A673 (cell line): ENCODE measurements at regions of chr11 and their contacts with region 1.

Region 1: GRCh38 chr11:117946842-117947526 is 17.8 kb upstream of the TMPRSS13 start:
- DNase-seq: peak; percentile 95
- H3K4me3 ChIP-seq: no peak overlapping the region
- H3K27ac ChIP-seq: no peak overlapping the region
- H3K4me1 ChIP-seq: no peaks in the 10 kb centered on the region
- H3K27me3 ChIP-seq: peaks cover 6% of the 10 kb centered on the region
- CTCF ChIP-seq: peak; percentile 97

Region 2: GRCh38 chr11:117426269-117426685 is 520.7 kb before region 1 on chr11:
- CTCF ChIA-PET with region 1: interaction called, 16 read pairs
- POLR2A ChIA-PET with region 1: no interaction called
- intact Hi-C with region 1: no loop called
- DNase-seq: peak; percentile 73
- H3K4me3 ChIP-seq: no peak overlapping the region
- H3K27ac ChIP-seq: no peak overlapping the region
- H3K4me1 ChIP-seq: no peaks in the 10 kb centered on the region
- H3K27me3 ChIP-seq: no peaks in the 10 kb centered on the region
- CTCF ChIP-seq: peak; percentile 100

Region 3: GRCh38 chr11:117807482-117808327 is 139.3 kb before region 1 on chr11:
- CTCF ChIA-PET with region 1: interaction called, 24 read pairs
- POLR2A ChIA-PET with region 1: interaction called, 3 read pairs
- intact Hi-C with region 1: no loop called
- DNase-seq: peak; percentile 83
- H3K4me3 ChIP-seq: no peak overlapping the region
- H3K27ac ChIP-seq: no peak overlapping the region
- H3K4me1 ChIP-seq: peaks cover 11% of the 10 kb centered on the region
- H3K27me3 ChIP-seq: peaks cover 3% of the 10 kb centered on the region
- CTCF ChIP-seq: peak; percentile 93

Region 4: GRCh38 chr11:117817368-117818040 is 129.5 kb before region 1 on chr11:
- CTCF ChIA-PET with region 1: interaction called, 41 read pairs
- POLR2A ChIA-PET with region 1: no interaction called
- intact Hi-C with region 1: loop called (anchors 1 kb)
- DNase-seq: peak; percentile 89
- H3K4me3 ChIP-seq: no peak overlapping the region
- H3K27ac ChIP-seq: no peak overlapping the region
- H3K4me1 ChIP-seq: peaks cover 35% of the 10 kb centered on the region
- H3K27me3 ChIP-seq: no peaks in the 10 kb centered on the region
- CTCF ChIP-seq: peak; percentile 99

Region 5: GRCh38 chr11:117843666-117844484 is 103.1 kb before region 1 on chr11:
- CTCF ChIA-PET with region 1: interaction called, 69 read pairs
- POLR2A ChIA-PET with region 1: no interaction called
- intact Hi-C with region 1: loop called (anchors 1 kb)
- DNase-seq: peak; percentile 71
- H3K4me3 ChIP-seq: no peak overlapping the region
- H3K27ac ChIP-seq: no peak overlapping the region
- H3K4me1 ChIP-seq: no peaks in the 10 kb centered on the region
- H3K27me3 ChIP-seq: no peaks in the 10 kb centered on the region
- CTCF ChIP-seq: peak; percentile 99

Region 6: DNA sequence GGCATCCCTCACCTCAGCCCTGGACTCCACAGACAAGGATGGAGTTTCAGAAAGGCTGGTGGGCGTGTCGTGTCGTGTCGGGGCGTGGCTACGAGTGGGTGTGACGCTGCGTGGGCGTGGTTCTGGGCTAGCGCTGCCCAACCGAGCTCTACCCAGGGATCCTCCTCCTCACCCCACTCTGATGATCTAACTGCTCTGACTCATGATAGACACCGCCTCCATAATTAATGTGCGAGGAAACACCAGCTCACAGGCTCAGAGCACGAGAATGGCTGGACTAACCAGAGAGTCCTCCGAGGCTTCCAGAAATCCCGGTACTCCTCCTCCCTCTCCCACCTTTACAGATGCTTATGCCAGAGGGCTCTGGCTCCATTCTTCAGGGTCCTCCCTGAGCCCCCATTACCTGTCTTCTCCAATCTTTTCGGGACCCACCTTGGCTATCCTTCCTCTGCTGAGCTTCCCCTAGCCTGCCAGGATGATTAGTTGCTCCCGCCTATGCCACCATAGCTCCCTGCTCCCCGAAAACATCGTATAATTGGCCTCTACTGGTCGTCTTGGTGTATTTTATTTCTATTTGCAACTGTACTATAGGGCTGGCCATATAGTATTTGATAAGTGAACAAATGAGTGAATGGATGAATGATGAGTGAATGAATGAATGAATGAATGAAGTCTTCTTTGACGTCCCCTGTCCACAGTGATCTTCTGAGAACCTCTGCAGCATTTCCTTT is 39.6 kb before region 1 on chr11:
- CTCF ChIA-PET with region 1: interaction called, 10 read pairs
- POLR2A ChIA-PET with region 1: no interaction called
- intact Hi-C with region 1: no loop called
- DNase-seq: peak; percentile 98
- H3K4me3 ChIP-seq: peak overlapping the region; percentile 44
- H3K27ac ChIP-seq: peak overlapping the region; percentile 87
- H3K4me1 ChIP-seq: peaks cover 18% of the 10 kb centered on the region
- H3K27me3 ChIP-seq: no peaks in the 10 kb centered on the region
- CTCF ChIP-seq: no peak

Region 7: GRCh38 chr11:118051611-118052461 is 104.9 kb after region 1 on chr11:
- CTCF ChIA-PET with region 1: interaction called, 10 read pairs
- POLR2A ChIA-PET with region 1: no interaction called
- intact Hi-C with region 1: loop called (anchors 2 kb)
- DNase-seq: no peak
- H3K4me3 ChIP-seq: no peak overlapping the region
- H3K27ac ChIP-seq: no peak overlapping the region
- H3K4me1 ChIP-seq: no peaks in the 10 kb centered on the region
- H3K27me3 ChIP-seq: peaks cover 26% of the 10 kb centered on the region
- CTCF ChIP-seq: no peak